Panc1 (cell line): ENCODE measurements at regions of chrX and their contacts with region 1.

Region 1: GRCh38 chrX:23742697-23743622 is at the start of gene ACOT9:
- DNase-seq: no peak
- ATAC-seq: peak; percentile 98
- H3K4me3 ChIP-seq: peak within 1 kb of the TSS; percentile 63 to 73
- H3K27ac ChIP-seq: peak within 1 kb of the TSS; percentile 83
- H3K4me1 ChIP-seq: peaks cover 2% of the 10 kb centered on the region; the same call in 1 of the 2 replicates
- H3K27me3 ChIP-seq: no peaks in the 10 kb centered on the region
- CTCF ChIP-seq: no peak
- total RNA-seq, gene ACOT9: 44.5 TPM

Region 2: GRCh38 chrX:23792861-23793553 is 50.0 kb after region 1 on chrX:
- CTCF ChIA-PET with region 1: no interaction called
- POLR2A ChIA-PET with region 1: interaction called, 12 read pairs
- in situ Hi-C with region 1: no loop called
- intact Hi-C with region 1: no loop called
- DNase-seq: no peak
- ATAC-seq: no peak; the same call in 1 of the 2 replicates
- H3K4me3 ChIP-seq: no peak overlapping the region
- H3K27ac ChIP-seq: peak overlapping the region; percentile 44
- H3K4me1 ChIP-seq: no peaks in the 10 kb centered on the region
- H3K27me3 ChIP-seq: no peaks in the 10 kb centered on the region
- CTCF ChIP-seq: no peak

Region 3: DNA sequence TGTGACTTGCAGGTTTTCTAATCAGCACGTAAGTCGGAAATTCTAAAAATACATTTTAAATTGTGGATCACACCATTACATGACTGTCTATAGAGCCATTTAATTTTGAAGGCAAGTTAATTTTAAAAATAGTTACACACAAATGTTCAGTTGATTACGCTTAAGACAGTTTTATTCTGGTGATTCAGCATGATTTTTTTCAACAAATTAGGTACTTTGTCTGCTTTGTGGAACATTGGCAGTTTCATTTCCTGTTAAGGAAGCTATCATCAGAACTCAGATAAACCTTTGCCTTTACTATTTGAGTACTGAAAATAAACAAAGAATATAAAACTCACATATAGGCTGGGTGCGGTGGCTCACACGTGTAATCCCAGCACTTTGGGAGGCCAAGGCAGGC is 59.5 kb after region 1 on chrX:
- CTCF ChIA-PET with region 1: no interaction called
- POLR2A ChIA-PET with region 1: interaction called, 10 read pairs
- in situ Hi-C with region 1: no loop called
- intact Hi-C with region 1: no loop called
- DNase-seq: no peak
- ATAC-seq: no peak
- H3K4me3 ChIP-seq: no peak overlapping the region
- H3K27ac ChIP-seq: peak overlapping the region; percentile 34; the same call in 1 of the 2 replicates
- H3K4me1 ChIP-seq: peaks cover 8% of the 10 kb centered on the region
- H3K27me3 ChIP-seq: no peaks in the 10 kb centered on the region
- CTCF ChIP-seq: no peak